Activated CD8-positive, alpha-beta memory T cell treated with anti-CD3 and anti-CD28 coated beads, Interleukin-2, amount 10 ng/mL, durations not matched to agents 7 days and 5 days (primary cell): ENCODE measurements at regions of chr14 and their contacts with region 1.

Region 1: DNA sequence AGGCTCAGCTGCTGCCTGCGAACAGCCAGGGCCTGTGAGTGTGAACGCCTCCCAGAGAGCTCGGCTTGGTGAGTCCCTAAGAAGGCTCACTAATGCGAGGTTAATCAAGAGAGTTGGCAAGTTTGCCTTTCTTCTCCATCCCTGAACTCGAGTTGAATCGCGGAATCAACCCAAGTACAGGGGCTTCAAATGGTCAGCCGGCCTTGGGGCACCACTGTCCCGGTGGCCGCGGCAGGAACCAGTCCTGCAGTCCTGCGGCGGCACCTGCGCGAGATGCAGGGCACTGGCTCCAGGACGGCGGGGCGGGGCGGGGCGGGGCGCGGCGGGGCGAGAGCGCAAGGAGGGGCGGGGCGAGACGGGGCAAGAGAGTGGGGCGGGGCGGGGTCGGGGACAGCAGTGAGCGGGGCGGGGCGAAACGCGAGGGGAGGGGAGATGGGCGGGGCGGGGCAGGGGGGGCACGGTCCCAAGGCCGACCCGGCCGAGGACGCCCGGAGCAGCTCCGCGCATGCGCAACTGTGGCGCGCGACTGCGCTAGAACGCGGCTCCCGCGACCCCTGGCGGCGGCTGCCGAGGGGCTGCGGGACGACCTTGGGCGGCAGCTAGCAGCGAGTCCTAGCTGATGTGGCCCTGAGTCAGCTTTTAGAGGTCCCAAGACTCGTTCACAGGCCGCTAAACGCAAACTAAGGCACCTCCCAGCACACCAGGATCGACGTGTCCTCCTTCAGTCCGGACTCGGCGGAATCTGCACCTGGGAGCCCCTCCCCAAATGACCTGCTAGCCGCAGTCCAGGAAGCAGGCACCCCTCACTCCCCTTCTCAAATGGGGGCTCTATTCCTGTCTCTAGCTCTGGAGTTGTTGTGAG is 58.0 kb downstream of the TTC7B start:
- DNase-seq: peak; percentile 95
- ATAC-seq: peak; percentile 96
- H3K4me3 Mint-ChIP-seq: peak overlapping the region; percentile 73
- H3K27ac Mint-ChIP-seq: peak overlapping the region; percentile 78
- H3K4me1 Mint-ChIP-seq: peaks cover 14% of the 10 kb centered on the region
- H3K27me3 Mint-ChIP-seq: peaks cover 28% of the 10 kb centered on the region

Region 2: DNA sequence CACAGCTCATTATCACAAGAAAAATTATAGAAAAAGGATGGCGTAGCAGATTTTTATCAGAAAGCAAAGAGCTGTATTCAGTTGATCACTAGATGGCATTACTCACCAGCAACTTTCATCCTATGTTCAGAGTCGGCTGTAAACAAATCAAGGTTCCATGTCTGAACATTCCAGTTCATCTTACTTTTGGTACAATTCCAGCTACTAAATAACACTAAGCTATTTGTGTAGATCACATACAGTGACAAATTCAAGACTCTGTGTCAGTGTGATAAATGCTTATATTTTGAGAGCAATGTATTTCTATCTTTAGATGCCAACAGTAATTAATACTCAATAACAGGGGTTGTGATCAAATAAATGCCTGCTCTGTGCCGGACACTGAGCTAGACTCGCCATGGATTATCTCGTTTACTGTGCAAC is 456.6 kb before region 1 on chr14:
- CTCF ChIA-PET with region 1: interaction called, 20 read pairs
- DNase-seq: no peak
- ATAC-seq: peak; percentile 33
- H3K4me3 Mint-ChIP-seq: no peak overlapping the region
- H3K27ac Mint-ChIP-seq: no peak overlapping the region
- H3K4me1 Mint-ChIP-seq: peaks cover 14% of the 10 kb centered on the region
- H3K27me3 Mint-ChIP-seq: no peaks in the 10 kb centered on the region

Region 3: GRCh38 chr14:90399541-90400444 is 358.5 kb before region 1 on chr14:
- CTCF ChIA-PET with region 1: interaction called, 14 read pairs
- DNase-seq: peak; percentile 93
- ATAC-seq: peak; percentile 46
- H3K4me3 Mint-ChIP-seq: peak overlapping the region; percentile 99
- H3K27ac Mint-ChIP-seq: peak overlapping the region; percentile 99
- H3K4me1 Mint-ChIP-seq: peaks cover 51% of the 10 kb centered on the region
- H3K27me3 Mint-ChIP-seq: no peaks in the 10 kb centered on the region

Region 4: DNA sequence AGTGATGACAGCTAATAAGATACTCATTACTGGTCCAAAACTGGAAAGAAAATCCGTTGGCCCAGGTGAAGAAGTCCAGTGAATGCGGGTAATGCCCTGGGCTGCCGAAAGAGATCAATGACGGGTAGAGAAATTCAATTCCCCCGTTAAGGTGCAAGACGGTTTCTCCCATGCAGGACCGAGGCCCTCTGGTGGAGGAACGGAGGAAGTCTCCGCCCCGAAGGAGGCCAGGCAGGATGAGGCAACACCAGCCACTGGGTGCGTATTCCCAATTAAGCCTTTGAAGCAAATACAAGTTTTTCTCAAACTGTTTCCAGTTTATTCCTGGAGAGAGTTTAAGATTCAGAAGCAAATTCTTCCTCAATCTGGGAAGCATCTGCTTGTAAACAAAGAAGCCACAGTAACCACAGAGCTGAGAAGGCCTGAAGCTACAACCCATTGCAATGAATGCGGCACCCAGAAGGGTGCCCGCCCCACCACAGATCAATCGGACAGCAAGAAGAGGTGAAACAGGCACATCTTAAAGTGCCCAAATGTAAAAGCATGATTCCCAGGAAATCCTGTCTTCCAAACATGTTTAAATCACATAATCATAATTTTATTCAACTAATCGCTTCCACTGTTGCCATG is 60.6 kb before region 1 on chr14:
- CTCF ChIA-PET with region 1: interaction called, 20 read pairs
- DNase-seq: peak; percentile 85
- ATAC-seq: peak; percentile 88
- H3K4me3 Mint-ChIP-seq: no peak overlapping the region
- H3K27ac Mint-ChIP-seq: no peak overlapping the region
- H3K4me1 Mint-ChIP-seq: peaks cover 21% of the 10 kb centered on the region
- H3K27me3 Mint-ChIP-seq: no peaks in the 10 kb centered on the region

Region 5: GRCh38 chr14:90743425-90743824 is 14.8 kb before region 1 on chr14:
- CTCF ChIA-PET with region 1: interaction called, 14 read pairs
- DNase-seq: no peak
- ATAC-seq: no peak
- H3K4me3 Mint-ChIP-seq: no peak overlapping the region
- H3K27ac Mint-ChIP-seq: no peak overlapping the region
- H3K4me1 Mint-ChIP-seq: peaks cover 2% of the 10 kb centered on the region
- H3K27me3 Mint-ChIP-seq: peaks cover 15% of the 10 kb centered on the region

Region 6: GRCh38 chr14:91009501-91010152 is 251.4 kb after region 1 on chr14:
- CTCF ChIA-PET with region 1: no interaction called
- DNase-seq: no peak
- ATAC-seq: peak; percentile 55
- H3K4me3 Mint-ChIP-seq: peak overlapping the region; percentile 10
- H3K27ac Mint-ChIP-seq: peak overlapping the region; percentile 80
- H3K4me1 Mint-ChIP-seq: peaks cover 35% of the 10 kb centered on the region
- H3K27me3 Mint-ChIP-seq: no peaks in the 10 kb centered on the region